IMR-90 (cell line): ENCODE measurements at regions of chr22 and their contacts with region 1.

Region 1: DNA sequence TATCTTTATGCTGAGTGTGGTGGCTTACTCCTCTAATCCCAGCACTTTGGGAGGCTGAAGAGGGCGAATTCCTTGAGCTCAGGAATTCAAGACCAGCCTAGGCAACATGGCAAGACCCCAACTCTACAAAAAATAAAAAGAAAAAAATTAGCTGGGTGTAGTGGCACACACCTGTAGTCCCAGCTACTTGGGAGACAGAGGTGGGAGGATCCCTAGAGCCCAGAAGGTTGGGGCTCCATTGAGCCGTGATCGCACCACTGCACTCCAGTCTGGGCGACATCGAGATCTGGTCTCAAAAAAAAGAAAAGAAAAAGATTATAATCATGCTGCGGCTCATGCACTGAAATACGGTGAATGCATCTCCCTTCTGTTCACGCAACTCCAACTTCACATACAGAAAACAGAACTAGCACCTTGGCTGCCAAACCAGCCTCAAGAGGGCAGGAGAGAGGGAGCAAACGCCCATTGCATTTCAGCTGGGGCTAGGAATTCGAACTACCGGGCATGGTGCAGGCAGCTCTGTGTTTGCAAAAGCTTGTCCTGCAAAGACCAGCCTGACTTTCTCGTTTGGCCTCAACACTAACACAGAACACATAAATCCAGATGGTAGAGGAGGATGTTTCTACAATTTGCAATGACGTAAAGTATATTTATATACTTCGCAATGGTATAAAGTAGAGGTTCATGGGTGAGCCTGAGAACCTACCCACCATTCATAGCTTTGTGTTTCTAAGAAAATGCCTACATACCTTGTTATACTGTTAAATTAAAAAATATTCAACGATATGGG is 6.3 kb upstream of the SYNGR1 start:
- DNase-seq: peak; percentile 58
- ATAC-seq: peak; percentile 76
- H3K4me3 ChIP-seq: no peak overlapping the region
- H3K27ac ChIP-seq: no peak overlapping the region
- H3K4me1 ChIP-seq: peaks cover 7% of the 10 kb centered on the region
- H3K27me3 ChIP-seq: no peaks in the 10 kb centered on the region; the same call in 1 of the 2 replicates
- CTCF ChIP-seq: peak; percentile 69
- POLR2A ChIP-seq: no peak
- RAD21 ChIP-seq: peak; percentile 62

Region 2: GRCh38 chr22:37910890-37911743 is 1432.3 kb before region 1 on chr22:
- CTCF ChIA-PET with region 1: no interaction called
- POLR2A ChIA-PET with region 1: interaction called, 13 read pairs
- dilution Hi-C with region 1: no loop called
- in situ Hi-C with region 1: no loop called
- intact Hi-C with region 1: no loop called
- DNase-seq: no peak
- ATAC-seq: no peak
- H3K4me3 ChIP-seq: no peak overlapping the region
- H3K27ac ChIP-seq: no peak overlapping the region
- H3K4me1 ChIP-seq: peaks cover 14% of the 10 kb centered on the region
- H3K27me3 ChIP-seq: no peaks in the 10 kb centered on the region
- CTCF ChIP-seq: no peak
- POLR2A ChIP-seq: no peak
- RAD21 ChIP-seq: no peak

Region 3: GRCh38 chr22:40313007-40313406 is 969.6 kb after region 1 on chr22:
- CTCF ChIA-PET with region 1: no interaction called
- POLR2A ChIA-PET with region 1: no interaction called
- dilution Hi-C with region 1: no loop called
- in situ Hi-C with region 1: no loop called
- intact Hi-C with region 1: no loop called
- DNase-seq: no peak
- ATAC-seq: no peak
- H3K4me3 ChIP-seq: no peak overlapping the region
- H3K27ac ChIP-seq: no peak overlapping the region
- H3K4me1 ChIP-seq: peaks cover 10% of the 10 kb centered on the region
- H3K27me3 ChIP-seq: no peaks in the 10 kb centered on the region
- CTCF ChIP-seq: no peak
- POLR2A ChIP-seq: no peak
- RAD21 ChIP-seq: no peak